Uterus (tissue), 4 donors: ENCODE measurements at regions of chr7 and their contacts with region 1.

Region 1: GRCh38 chr7:74206589-74207120 is 3.2 kb upstream of the LAT2 start:
- DNase-seq: peak; percentile 83 to 89
- H3K4me3 ChIP-seq: peak overlapping the region in 1 of 2 donors; percentile 24
- H3K27ac ChIP-seq: no peak overlapping the region
- H3K4me1 ChIP-seq: no peaks in the 10 kb centered on the region
- H3K27me3 ChIP-seq: no peaks in the 10 kb centered on the region
- CTCF ChIP-seq: peak; percentile 94 to 97 (median 96)
- POLR2A ChIP-seq: no peak

Region 2: DNA sequence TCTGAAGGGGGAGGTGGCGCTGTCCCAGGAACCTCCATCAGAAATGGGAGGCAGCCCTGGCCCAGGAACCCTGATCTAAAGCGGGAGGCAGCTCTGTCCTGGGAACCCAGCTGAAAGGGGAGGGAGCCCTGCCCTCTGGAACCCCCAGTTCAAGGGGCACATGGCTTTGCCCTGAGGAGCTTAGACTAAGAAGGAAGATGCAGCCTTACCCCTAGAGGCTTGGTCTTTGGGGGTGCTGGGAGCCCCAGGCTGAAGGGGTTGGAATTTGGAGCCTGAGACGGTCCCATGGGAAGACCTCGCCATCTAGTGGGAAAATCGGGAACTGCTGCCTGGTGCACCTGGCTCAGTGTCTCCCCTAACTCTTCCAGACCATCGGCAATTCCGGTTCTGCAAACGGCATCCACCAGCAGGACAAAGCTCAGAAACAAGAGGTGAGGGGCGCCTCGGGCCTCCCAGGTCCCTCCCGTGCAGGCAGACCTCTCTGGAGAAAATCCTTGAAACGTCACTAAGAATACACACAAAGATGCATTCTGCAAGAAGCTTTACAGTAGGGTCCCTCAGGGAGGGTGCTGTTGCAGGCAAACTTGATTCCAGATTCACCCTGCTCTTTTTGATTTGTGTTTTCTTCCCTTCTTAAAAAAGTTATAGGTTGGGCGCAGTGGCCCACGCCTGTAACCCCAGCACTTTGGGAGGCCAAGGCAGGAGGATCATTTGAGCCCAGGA is 194.6 kb after region 1 on chr7:
- intact Hi-C with region 1: loop called (anchors 2 kb)
- DNase-seq: peak; percentile 64 to 74
- H3K4me3 ChIP-seq: no peak overlapping the region
- H3K27ac ChIP-seq: no peak overlapping the region
- H3K4me1 ChIP-seq: no peaks in the 10 kb centered on the region
- H3K27me3 ChIP-seq: no peaks in the 10 kb centered on the region
- CTCF ChIP-seq: peak; percentile 92 to 98 (median 94)
- POLR2A ChIP-seq: no peak

Region 3: GRCh38 chr7:74718336-74718735 is 511.7 kb after region 1 on chr7:
- intact Hi-C with region 1: no loop called
- DNase-seq: no peak
- H3K4me3 ChIP-seq: no peak overlapping the region
- H3K27ac ChIP-seq: no peak overlapping the region
- H3K4me1 ChIP-seq: no peaks in the 10 kb centered on the region
- H3K27me3 ChIP-seq: no peaks in the 10 kb centered on the region
- CTCF ChIP-seq: no peak
- POLR2A ChIP-seq: no peak